Mucosa of descending colon (tissue), 3 donors: ENCODE measurements at regions of chr1 and their contacts with region 1.

Region 1: DNA sequence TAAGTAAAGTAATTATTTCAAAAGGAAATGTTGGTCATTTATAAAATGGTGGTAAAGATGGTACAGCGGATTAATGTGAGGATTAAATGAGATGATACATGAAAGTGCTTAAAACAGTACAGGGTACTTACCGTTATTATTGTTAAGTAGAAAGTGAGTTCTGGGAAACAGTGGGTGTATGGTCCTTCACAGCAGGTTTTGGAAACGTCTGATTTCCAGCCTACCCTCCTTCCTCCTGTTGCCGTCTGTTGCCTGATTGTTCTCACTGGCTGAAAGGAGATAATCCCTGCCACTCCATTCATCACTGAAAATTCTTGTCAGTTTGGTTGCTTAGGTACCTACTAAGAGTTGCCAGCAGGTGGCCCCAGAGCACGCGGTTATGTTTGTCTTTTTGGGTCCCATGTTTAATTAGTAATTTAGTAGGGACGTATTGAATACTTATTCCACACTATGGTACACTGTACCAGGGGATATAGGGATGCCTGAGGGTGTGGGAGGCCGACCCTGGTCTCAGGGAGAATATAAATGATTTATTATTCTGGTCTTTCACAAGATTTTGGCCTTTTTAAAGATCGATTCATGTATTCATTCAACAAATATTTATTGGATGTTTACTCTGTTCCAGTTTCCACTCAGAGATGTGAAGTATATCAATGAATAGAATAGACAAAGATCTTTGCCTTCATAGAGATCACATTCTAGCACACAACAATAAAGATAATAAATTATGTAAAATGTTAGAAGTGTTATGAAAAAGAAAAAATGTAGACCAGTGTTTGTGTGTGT is 30.8 kb upstream of the RPTN start:
- DNase-seq: peak in 2 of 3 donors; percentile 51 to 68
- ATAC-seq: peak; percentile 56
- H3K4me3 ChIP-seq: no peak overlapping the region
- H3K4me1 ChIP-seq: no peaks in the 10 kb centered on the region
- CTCF ChIP-seq: peak; percentile 53

Region 2: GRCh38 chr1:152001391-152002249 is 188.2 kb before region 1 on chr1:
- intact Hi-C with region 1: no loop called
- DNase-seq: peak; percentile 81 to 97 (median 88)
- ATAC-seq: peak; percentile 83
- H3K4me3 ChIP-seq: no peak overlapping the region
- H3K4me1 ChIP-seq: peaks cover 13% of the 10 kb centered on the region
- CTCF ChIP-seq: peak; percentile 87

Region 3: DNA sequence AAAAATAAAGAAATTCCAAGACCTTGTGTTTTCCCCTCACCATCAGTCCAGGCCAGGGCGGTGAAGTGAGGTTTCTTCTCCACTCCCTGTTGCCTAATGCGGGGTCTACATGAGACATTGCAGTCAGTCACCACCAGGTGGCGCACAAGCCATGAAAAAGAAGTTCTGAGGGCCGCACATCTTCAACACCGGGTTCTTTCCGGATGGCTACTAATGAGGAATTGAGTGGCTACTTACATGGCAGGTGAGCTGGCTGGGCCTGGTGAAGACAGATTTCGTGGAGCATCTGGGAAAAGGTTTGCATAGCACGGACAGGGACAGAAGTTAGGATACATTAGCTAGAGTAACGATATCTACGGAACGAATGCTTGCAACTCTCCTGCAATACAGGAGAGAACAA is 137.2 kb before region 1 on chr1:
- intact Hi-C with region 1: loop called (anchors 2 to 5 kb)
- DNase-seq: peak; percentile 83 to 90 (median 86)
- ATAC-seq: peak; percentile 39
- H3K4me3 ChIP-seq: no peak overlapping the region
- H3K4me1 ChIP-seq: peaks cover 13% of the 10 kb centered on the region
- CTCF ChIP-seq: peak; percentile 86

Region 4: DNA sequence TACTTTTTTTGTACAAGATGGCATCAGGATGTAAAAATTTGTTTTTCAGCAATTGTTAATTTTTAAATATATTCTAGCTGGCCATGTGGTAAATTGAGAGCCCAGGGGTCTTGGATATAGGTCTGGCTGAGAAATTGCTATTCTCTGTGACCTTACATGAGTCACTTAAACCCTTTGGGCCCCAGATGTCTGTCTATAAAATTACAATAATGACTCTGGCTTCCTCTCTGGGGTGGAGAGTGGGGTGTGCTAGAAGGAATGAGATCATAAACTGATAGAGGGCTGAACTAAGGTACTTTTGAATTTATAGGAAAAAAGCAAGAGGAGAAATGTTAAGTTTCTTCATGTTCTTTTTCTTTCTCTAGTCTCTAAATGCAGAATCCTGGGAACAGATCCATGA is 62.2 kb before region 1 on chr1:
- intact Hi-C with region 1: no loop called
- DNase-seq: no peak
- ATAC-seq: no peak
- H3K4me3 ChIP-seq: no peak overlapping the region
- H3K4me1 ChIP-seq: no peaks in the 10 kb centered on the region
- CTCF ChIP-seq: no peak

Region 5: GRCh38 chr1:152398812-152399698 is 209.2 kb after region 1 on chr1:
- intact Hi-C with region 1: no loop called
- DNase-seq: peak in 1 of 3 donors; percentile 23
- ATAC-seq: no peak
- H3K4me3 ChIP-seq: no peak overlapping the region
- H3K4me1 ChIP-seq: no peaks in the 10 kb centered on the region
- CTCF ChIP-seq: no peak

Region 6: DNA sequence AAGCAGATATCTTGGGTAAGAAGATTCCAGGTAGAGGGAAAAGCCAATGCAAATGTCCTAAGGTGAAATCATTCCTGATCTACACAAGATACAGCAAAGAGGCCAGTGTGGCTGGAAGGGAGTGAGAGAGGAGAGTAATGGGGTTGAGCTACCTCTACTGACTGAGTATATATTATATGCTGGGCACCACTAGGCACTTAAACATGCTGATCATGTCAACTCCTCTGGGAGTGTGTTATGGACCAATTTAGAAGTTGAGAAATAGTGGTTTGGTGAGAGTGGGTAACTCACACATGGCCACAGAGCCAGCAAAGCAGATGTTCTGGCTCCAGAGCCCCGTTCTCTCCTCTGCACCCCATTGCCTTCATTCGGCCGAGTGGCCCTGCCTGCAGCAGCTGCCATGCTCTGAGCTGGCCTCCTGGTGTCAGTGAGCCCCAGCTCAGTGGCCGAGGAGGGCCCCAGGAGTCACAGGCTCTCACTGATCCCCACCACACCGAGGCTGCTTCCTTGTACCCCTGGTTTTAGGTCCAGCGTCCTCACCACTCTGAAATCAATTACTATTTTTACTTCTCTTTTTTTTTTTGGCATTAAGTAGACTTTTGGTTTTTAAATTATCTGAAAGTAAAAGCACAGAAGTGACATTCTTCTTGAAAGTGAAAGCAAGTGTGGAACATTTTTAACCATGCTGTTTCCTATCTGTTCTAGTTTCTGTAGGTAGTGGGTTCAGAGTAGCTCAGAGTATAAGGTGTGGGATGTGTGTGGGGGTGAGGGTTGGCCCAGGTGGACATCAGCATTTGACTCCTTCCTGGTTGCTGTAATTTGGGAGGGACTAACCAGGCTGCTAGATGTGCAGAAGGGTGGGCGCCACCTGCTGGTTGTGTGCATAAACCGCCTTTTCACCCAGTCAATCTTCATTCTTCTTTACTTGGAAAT is 270.0 kb after region 1 on chr1:
- intact Hi-C with region 1: loop called (anchors 5 to 10 kb)
- DNase-seq: peak; percentile 72 to 78 (median 75)
- ATAC-seq: peak; percentile 88
- H3K4me3 ChIP-seq: no peak overlapping the region
- H3K4me1 ChIP-seq: no peaks in the 10 kb centered on the region
- CTCF ChIP-seq: peak; percentile 71